Activated CD4-positive, alpha-beta memory T cell treated with anti-CD3 and anti-CD28 coated beads, Interleukin-2, amount 10 ng/mL, durations not matched to agents 7 days and 5 days (primary cell): ENCODE measurements at regions of chr2 and their contacts with region 1.

Region 1: GRCh38 chr2:219206442-219207253 is at the start of gene ZFAND2B:
- DNase-seq: peak; percentile 96
- H3K4me3 Mint-ChIP-seq: peak within 1 kb of the TSS; percentile 79
- H3K27ac Mint-ChIP-seq: peak within 1 kb of the TSS; percentile 88
- H3K4me1 Mint-ChIP-seq: peaks cover 52% of the 10 kb centered on the region
- H3K27me3 Mint-ChIP-seq: no peaks in the 10 kb centered on the region
- total RNA-seq, gene ZFAND2B: 51.4 to 56.7 TPM

Region 2: GRCh38 chr2:219171231-219171651 is 35.4 kb before region 1 on chr2:
- CTCF ChIA-PET with region 1: interaction called, 12 read pairs
- POLR2A ChIA-PET with region 1: interaction called, 160 read pairs
- DNase-seq: peak; percentile 24
- H3K4me3 Mint-ChIP-seq: no peak overlapping the region
- H3K27ac Mint-ChIP-seq: no peak overlapping the region
- H3K4me1 Mint-ChIP-seq: peaks cover 42% of the 10 kb centered on the region
- H3K27me3 Mint-ChIP-seq: no peaks in the 10 kb centered on the region

Region 3: DNA sequence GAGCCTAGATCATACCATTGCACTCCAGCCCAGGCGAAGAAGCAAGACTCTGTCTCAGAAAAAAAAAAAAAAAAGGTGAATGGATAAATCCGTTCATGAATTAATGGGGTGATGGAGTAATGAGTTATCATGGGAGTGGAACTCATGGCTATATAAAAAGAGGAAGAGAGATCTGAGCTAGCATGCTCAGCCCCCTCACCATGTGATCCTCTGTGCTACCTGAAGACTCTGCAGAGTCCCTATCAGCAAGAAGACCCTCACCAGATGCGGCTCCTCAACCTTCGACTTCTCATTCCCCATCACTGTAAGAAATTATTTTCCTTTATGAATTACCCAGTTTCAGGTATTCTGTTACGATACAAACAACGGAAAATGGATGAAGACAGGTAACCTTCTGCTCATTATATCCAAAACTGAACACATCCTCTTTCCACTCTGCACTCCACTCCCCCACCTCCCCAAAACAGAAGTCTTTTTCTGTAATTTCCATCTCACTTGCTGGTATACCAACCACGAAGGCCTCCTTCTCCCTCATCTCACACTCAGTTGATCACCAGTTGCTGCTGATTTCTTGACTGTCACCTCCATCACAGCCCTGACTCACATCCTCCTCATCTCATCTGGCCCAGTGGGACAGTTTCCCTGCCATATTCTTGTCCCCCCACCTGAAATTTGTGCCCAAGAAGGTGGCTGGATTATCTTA is 19.7 kb before region 1 on chr2:
- CTCF ChIA-PET with region 1: interaction called, 7 read pairs
- POLR2A ChIA-PET with region 1: interaction called, 160 read pairs
- DNase-seq: no peak
- H3K4me3 Mint-ChIP-seq: no peak overlapping the region
- H3K27ac Mint-ChIP-seq: peak overlapping the region; percentile 21
- H3K4me1 Mint-ChIP-seq: peaks cover 25% of the 10 kb centered on the region
- H3K27me3 Mint-ChIP-seq: no peaks in the 10 kb centered on the region

Region 4: DNA sequence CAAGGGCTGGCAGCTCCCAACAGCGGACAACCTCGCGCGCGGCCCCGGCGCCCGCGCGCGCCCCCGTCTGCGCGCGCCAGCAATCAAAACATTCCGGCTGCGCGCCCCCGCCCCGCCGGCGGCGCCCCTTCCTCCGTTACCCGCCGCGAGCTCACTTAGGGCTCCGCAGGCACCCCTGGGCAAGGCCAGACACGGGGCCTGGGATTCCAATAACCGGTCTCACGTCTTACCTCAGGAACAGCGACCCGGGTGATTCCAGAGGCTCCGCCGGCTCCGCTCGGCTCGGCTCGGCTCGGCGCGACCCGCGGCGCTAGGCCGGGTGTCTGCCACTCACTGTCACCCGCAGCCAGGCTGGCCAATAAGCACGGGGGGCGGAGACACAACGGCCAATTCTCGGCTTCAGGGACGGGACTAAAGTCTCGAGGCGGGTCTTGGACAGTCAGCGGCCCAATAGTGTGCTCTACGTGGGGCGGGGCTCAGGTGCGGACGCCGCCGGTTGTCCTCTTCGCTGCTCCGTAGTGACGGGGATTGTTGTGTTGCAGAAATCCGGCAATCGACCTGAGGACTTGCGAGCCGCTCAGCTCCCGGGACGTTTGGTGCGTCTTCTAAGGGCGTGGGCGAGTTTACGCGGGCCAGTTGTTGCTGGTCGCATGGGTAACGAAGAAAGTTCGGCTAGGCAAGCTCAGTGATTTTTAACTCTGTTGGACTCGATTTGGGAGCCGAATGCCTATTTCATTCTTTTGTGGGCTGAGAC is 22.8 kb after region 1 on chr2 and contains the starts of genes ANKZF1 and ATG9A:
- CTCF ChIA-PET with region 1: interaction called, 4 read pairs
- POLR2A ChIA-PET with region 1: interaction called, 17 read pairs
- DNase-seq: peak; percentile 99
- H3K4me3 Mint-ChIP-seq: peak within 1 kb of the TSS; percentile 99
- H3K27ac Mint-ChIP-seq: peak within 1 kb of the TSS; percentile 100
- H3K4me1 Mint-ChIP-seq: peaks cover 56% of the 10 kb centered on the region
- H3K27me3 Mint-ChIP-seq: no peaks in the 10 kb centered on the region
- total RNA-seq, gene ANKZF1: 121 to 122 TPM
- total RNA-seq, gene ATG9A: 58.9 to 60.7 TPM

Region 5: GRCh38 chr2:219253753-219254590 is 47.3 kb after region 1 on chr2 and contains the start of gene TUBA4A:
- CTCF ChIA-PET with region 1: interaction called, 3 read pairs
- POLR2A ChIA-PET with region 1: interaction called, 51 read pairs
- DNase-seq: peak; percentile 92
- H3K4me3 Mint-ChIP-seq: peak within 1 kb of the TSS; percentile 100
- H3K27ac Mint-ChIP-seq: peak within 1 kb of the TSS; percentile 81
- H3K4me1 Mint-ChIP-seq: peaks cover 47% of the 10 kb centered on the region
- H3K27me3 Mint-ChIP-seq: peaks cover 2% of the 10 kb centered on the region
- total RNA-seq, gene TUBA4A: 313 to 344 TPM

Region 6: DNA sequence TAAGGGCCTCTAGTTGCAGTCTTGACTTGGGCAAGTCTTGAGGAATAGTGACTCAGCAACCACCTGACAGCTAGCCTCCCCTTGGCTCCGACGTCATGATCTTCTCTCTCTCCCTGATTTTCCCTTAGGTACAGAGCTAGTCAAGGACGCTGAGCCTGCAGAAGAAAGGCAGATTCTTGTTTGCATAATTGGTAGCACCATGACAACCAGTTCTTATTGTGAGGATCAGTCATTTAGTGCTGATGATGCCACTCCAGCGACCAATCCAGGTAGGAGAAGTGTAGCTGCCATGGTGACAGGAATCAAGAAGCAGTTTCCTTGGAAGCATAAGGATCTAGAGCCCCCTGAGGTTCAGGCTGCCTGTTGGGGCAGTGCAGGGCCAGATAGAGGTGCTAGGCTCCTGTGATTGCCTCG is 128.7 kb after region 1 on chr2:
- CTCF ChIA-PET with region 1: no interaction called
- POLR2A ChIA-PET with region 1: no interaction called
- DNase-seq: no peak
- H3K4me3 Mint-ChIP-seq: no peak overlapping the region
- H3K27ac Mint-ChIP-seq: no peak overlapping the region
- H3K4me1 Mint-ChIP-seq: no peaks in the 10 kb centered on the region
- H3K27me3 Mint-ChIP-seq: peaks cover 50% of the 10 kb centered on the region